Heart right ventricle (tissue), 16 donors: ENCODE measurements at regions of chr1 and their contacts with region 1.

Region 1: DNA sequence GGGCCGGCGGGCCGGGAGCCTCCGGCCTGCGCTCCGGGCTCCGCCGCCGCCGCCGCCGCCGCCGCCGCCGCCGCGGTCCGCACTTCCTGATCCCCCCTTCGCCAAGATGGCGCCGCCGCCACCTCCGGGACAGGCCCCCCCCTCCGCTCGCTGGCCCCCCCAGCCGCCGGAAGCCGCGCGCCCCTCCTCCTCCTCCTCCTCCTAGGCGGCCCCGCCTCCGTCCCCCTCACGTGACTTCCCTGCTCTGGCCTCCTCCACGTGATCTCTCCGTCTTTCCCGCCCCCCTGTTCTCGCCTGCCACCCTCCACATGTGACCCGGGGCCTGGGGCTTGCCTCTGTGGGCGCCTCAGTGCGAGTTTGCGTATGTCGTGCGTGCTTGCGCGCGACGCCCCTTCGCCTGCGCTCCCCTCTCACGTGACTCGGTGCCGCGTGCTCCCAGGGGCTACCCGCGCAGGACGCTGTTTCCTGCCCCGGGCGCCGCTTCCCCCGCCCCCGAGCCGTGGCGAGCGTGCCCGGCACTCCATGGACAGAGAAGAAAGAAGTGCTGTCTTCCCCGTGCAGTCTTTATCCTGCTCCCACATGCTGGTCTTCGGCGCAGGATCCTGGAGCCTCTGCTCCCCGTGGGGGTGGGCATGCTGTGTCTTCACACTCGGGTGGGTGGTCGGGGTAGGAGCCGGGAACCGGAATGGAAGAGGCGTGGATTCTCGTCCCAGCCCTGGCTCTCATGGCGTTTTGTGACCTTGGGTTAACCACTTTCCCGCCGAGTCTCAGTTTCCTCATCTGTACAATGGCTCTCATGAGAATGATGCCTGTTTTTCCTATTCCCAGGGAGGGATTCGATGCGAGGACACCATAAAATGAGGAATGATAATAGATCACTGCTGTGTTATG is at the start of gene UBE2Q1:
- DNase-seq: peak; percentile 98 to 99
- ATAC-seq: peak; percentile 96 to 98 (median 97)
- H3K4me3 ChIP-seq: peak within 1 kb of the TSS; percentile 69 to 97 (median 93)
- H3K27ac ChIP-seq: peak within 1 kb of the TSS; percentile 77 to 98 (median 94)
- H3K4me1 ChIP-seq: peaks cover 13 to 39% (median 27%) of the 10 kb centered on the region in 9 donors
- H3K27me3 ChIP-seq: no peaks in the 10 kb centered on the region
- CTCF ChIP-seq: no peak
- total RNA-seq, gene UBE2Q1: 49.1 to 83.5 (median 59.0) TPM

Region 2: DNA sequence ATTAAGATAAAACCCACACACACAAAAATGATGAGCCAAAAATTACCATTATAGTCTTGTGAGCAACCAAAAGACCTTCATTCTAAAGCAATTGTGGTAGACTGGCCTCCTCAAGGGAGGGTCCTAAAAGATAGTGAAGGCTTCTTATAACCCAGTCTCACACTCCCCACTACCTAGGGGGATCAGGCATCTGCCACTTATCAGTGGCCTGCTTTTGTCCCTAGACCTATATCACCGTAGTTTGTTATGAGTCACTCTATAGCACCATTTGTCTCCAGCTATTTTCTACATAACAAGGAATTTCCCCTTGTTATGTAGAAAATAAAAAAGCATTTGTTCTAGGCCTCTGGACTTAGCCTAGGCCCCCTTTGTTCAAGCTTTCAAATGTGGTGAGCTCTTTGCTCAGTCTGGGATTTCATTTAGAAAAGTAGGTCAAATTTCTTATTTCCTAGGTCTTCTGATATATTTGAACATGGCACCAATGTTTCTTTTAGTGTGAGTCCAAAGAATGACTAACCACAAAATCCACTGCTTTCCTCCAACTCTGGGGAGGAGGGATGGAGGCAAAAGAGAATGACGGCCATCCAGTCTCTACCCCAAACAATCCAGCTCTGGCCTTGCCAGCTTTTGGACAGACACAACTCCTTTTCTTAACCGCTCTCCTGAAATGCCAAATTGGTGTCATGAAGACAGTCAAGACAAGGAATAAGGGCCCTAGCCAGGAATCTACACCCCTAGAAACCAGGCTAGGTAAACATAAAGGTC is 40.2 kb after region 1 on chr1:
- intact Hi-C with region 1: loop called in 1 of 10 experiments (anchors 5 kb)
- DNase-seq: no peak
- ATAC-seq: peak in 3 of 8 donors; percentile 5 to 22 (median 21)
- H3K4me3 ChIP-seq: no peak overlapping the region
- H3K27ac ChIP-seq: peak overlapping the region in 9 of 10 donors; percentile 2 to 79 (median 57)
- H3K4me1 ChIP-seq: peaks cover 18 to 60% (median 52%) of the 10 kb centered on the region in 9 donors
- H3K27me3 ChIP-seq: no peaks in the 10 kb centered on the region
- CTCF ChIP-seq: no peak

Region 3: GRCh38 chr1:154669464-154670282 is 110.9 kb after region 1 on chr1:
- intact Hi-C with region 1: loop called in 6 of 10 experiments (anchors 5 to 10 kb)
- DNase-seq: peak; percentile 65 to 78
- ATAC-seq: peak; percentile 93 to 99 (median 98)
- H3K4me3 ChIP-seq: no peak overlapping the region
- H3K27ac ChIP-seq: no peak overlapping the region
- H3K4me1 ChIP-seq: no peaks in the 10 kb centered on the region
- H3K27me3 ChIP-seq: no peaks in the 10 kb centered on the region
- CTCF ChIP-seq: peak; percentile 69 to 88 (median 83)

Region 4: GRCh38 chr1:154703170-154703569 is 144.3 kb after region 1 on chr1:
- intact Hi-C with region 1: no loop called
- DNase-seq: no peak
- ATAC-seq: no peak
- H3K4me3 ChIP-seq: no peak overlapping the region
- H3K27ac ChIP-seq: no peak overlapping the region
- H3K4me1 ChIP-seq: peaks cover 0 to 23% (median 6%) of the 10 kb centered on the region in 9 donors
- H3K27me3 ChIP-seq: no peaks in the 10 kb centered on the region
- CTCF ChIP-seq: no peak

Region 5: GRCh38 chr1:154760469-154760933 is 201.7 kb after region 1 on chr1:
- intact Hi-C with region 1: loop called in 7 of 10 experiments (anchors 10 kb)
- DNase-seq: peak; percentile 46 to 77
- ATAC-seq: peak; percentile 75 to 91 (median 86)
- H3K4me3 ChIP-seq: peak overlapping the region; percentile 16 to 61 (median 48)
- H3K27ac ChIP-seq: peak overlapping the region in 4 of 10 donors; percentile 22 to 45 (median 42)
- H3K4me1 ChIP-seq: peaks cover 0 to 35% (median 23%) of the 10 kb centered on the region in 9 donors
- H3K27me3 ChIP-seq: peaks cover 0 to 60% (median 3%) of the 10 kb centered on the region in 7 donors
- CTCF ChIP-seq: peak; percentile 62 to 88 (median 79)

Region 6: GRCh38 chr1:154878371-154879022 is 319.7 kb after region 1 on chr1:
- intact Hi-C with region 1: loop called in 8 of 10 experiments (anchors 2 to 5 kb)
- DNase-seq: peak; percentile 80 to 81
- ATAC-seq: peak; percentile 92 to 97 (median 96)
- H3K4me3 ChIP-seq: no peak overlapping the region
- H3K27ac ChIP-seq: no peak overlapping the region
- H3K4me1 ChIP-seq: peaks cover 0 to 7% (median 3%) of the 10 kb centered on the region in 9 donors
- H3K27me3 ChIP-seq: no peaks in the 10 kb centered on the region
- CTCF ChIP-seq: peak; percentile 82 to 92 (median 90)

Region 7: DNA sequence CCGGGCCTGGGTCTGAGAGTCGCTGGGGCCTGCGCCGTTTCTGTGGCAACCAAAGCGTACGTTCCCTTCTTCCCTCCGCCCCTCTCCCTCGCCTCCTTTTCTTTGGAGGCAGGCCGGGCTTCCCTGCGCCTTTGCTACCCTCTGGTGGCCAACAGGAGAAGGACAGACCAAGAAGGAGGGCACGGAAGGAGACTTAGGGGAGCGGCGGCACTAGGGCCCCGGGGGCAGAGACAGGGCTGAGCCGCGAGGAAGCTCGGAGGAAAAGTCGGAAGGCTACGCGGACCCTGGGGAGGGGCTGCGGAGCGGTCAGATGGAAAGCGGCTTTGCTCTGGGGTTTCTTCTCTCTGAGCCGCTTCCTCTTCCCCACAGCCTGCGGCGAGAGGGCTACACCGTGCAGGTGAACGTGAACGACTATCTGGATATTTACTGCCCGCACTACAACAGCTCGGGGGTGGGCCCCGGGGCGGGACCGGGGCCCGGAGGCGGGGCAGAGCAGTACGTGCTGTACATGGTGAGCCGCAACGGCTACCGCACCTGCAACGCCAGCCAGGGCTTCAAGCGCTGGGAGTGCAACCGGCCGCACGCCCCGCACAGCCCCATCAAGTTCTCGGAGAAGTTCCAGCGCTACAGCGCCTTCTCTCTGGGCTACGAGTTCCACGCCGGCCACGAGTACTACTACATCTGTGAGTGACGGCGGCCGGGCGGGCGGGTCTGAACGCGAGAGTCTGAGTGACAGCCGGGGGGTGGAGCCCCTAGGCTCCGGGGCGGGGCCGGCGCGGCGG is 526.1 kb after region 1 on chr1:
- intact Hi-C with region 1: loop called in 1 of 10 experiments (anchors 10 kb)
- DNase-seq: peak; percentile 91 to 94
- ATAC-seq: peak; percentile 86 to 93 (median 90)
- H3K4me3 ChIP-seq: peak overlapping the region; percentile 33 to 82 (median 72)
- H3K27ac ChIP-seq: peak overlapping the region; percentile 67 to 92 (median 88)
- H3K4me1 ChIP-seq: peaks cover 23 to 62% (median 49%) of the 10 kb centered on the region in 9 donors
- H3K27me3 ChIP-seq: peaks cover 36 to 46% (median 46%) of the 10 kb centered on the region in 7 donors
- CTCF ChIP-seq: peak; percentile 82 to 97 (median 92)